ENCODE measurements at regions of chr3 and their contacts with region 1.

Region 1: GRCh38 chr3:23036728-23037127 is 166.4 kb upstream of the UBE2E2 start:
- DNase-seq: no peak
- H3K4me3 ChIP-seq: no peak overlapping the region
- H3K27ac ChIP-seq: no peak overlapping the region
- H3K4me1 ChIP-seq: peaks cover 11% of the 10 kb centered on the region; the same call in 1 of the 2 replicates
- H3K27me3 ChIP-seq: no peaks in the 10 kb centered on the region
- CTCF ChIP-seq: no peak

Region 2: DNA sequence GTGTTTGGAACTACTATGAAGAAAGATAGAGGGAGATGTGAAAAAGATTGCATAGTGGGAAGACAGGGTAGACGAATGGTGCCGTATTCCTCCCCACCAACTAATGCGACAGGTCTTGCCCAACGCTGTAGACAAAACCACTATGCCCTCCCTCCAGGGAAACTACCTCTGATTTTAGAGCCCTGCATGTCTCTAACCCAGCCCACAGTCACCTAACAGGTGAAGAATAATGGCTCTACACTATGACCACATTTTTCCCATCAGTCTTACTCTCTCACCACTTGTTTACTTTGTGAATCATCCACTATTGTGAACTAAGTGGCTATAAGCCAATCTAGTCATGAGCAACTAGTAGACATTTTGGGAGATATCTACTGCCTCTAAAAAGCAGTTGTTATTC is 58.3 kb after region 1 on chr3:
- CTCF ChIA-PET with region 1: no interaction called
- POLR2A ChIA-PET with region 1: no interaction called
- intact Hi-C with region 1: loop called (anchors 5 kb)
- DNase-seq: peak; percentile 56 to 87
- H3K4me3 ChIP-seq: no peak overlapping the region
- H3K27ac ChIP-seq: no peak overlapping the region
- H3K4me1 ChIP-seq: peaks cover 12% of the 10 kb centered on the region; the same call in 1 of the 2 replicates
- H3K27me3 ChIP-seq: peaks cover 3% of the 10 kb centered on the region; the same call in 1 of the 2 replicates
- CTCF ChIP-seq: no peak